A673 (cell line): ENCODE measurements at regions of chr17 and their contacts with region 1.

Region 1: GRCh38 chr17:55295411-55296170 is 30.8 kb downstream of the HLF start:
- DNase-seq: peak; percentile 78
- H3K4me3 ChIP-seq: no peak overlapping the region
- H3K27ac ChIP-seq: no peak overlapping the region
- H3K4me1 ChIP-seq: peaks cover 22% of the 10 kb centered on the region
- H3K27me3 ChIP-seq: no peaks in the 10 kb centered on the region
- CTCF ChIP-seq: peak; percentile 87

Region 2: DNA sequence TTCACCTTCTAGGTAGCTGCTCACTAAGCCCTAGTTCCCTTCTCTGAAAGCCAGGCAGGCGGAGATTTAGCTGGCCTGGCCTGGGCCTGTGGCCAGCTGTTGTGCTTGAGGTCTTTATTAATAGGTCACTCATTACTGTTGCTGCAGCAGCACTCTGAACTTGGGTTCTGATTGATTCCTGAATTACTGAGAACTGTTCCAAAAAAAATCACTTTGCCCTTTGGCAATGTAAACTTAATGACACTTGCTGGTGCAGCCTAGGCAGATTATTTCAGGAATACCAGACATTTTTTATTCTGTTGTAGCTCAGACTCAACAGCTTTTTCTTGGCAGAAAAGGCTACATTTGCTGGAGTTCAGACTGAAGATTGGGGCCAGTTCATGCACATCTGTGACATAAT is 392.2 kb before region 1 on chr17:
- CTCF ChIA-PET with region 1: no interaction called
- POLR2A ChIA-PET with region 1: no interaction called
- intact Hi-C with region 1: no loop called
- DNase-seq: no peak
- H3K4me3 ChIP-seq: no peak overlapping the region
- H3K27ac ChIP-seq: no peak overlapping the region
- H3K4me1 ChIP-seq: peaks cover 9% of the 10 kb centered on the region
- H3K27me3 ChIP-seq: no peaks in the 10 kb centered on the region
- CTCF ChIP-seq: no peak

Region 3: GRCh38 chr17:54992797-54993639 is 302.6 kb before region 1 on chr17:
- CTCF ChIA-PET with region 1: no interaction called
- POLR2A ChIA-PET with region 1: no interaction called
- intact Hi-C with region 1: loop called (anchors 2 kb)
- DNase-seq: peak; percentile 74
- H3K4me3 ChIP-seq: no peak overlapping the region
- H3K27ac ChIP-seq: no peak overlapping the region
- H3K4me1 ChIP-seq: no peaks in the 10 kb centered on the region
- H3K27me3 ChIP-seq: no peaks in the 10 kb centered on the region
- CTCF ChIP-seq: peak; percentile 80

Region 4: DNA sequence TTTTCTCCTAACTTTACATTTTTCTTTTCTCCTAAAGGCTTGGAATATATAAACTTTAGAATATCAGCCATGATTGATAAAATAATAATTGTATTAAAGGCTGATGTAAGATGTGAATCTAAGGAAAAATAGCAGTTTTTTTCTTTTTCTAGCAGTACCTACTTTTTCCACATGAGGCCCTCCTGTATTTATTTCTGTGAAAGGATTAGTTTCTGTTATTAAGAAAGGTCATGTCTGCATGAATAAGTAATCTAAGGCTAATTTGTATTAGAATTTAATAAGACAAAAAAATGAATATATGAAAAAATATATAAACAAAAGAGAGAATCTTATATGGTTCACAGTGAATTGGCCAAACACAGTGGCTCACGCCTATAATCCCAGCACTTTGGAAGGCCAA is 241.7 kb before region 1 on chr17:
- CTCF ChIA-PET with region 1: no interaction called
- POLR2A ChIA-PET with region 1: no interaction called
- intact Hi-C with region 1: loop called (anchors 1 kb)
- DNase-seq: peak; percentile 58
- H3K4me3 ChIP-seq: no peak overlapping the region
- H3K27ac ChIP-seq: no peak overlapping the region
- H3K4me1 ChIP-seq: peaks cover 31% of the 10 kb centered on the region
- H3K27me3 ChIP-seq: no peaks in the 10 kb centered on the region
- CTCF ChIP-seq: peak; percentile 73

Region 5: GRCh38 chr17:55224746-55225145 is 70.8 kb before region 1 on chr17:
- CTCF ChIA-PET with region 1: no interaction called
- POLR2A ChIA-PET with region 1: no interaction called
- intact Hi-C with region 1: no loop called
- DNase-seq: no peak
- H3K4me3 ChIP-seq: no peak overlapping the region
- H3K27ac ChIP-seq: no peak overlapping the region
- H3K4me1 ChIP-seq: no peaks in the 10 kb centered on the region
- H3K27me3 ChIP-seq: no peaks in the 10 kb centered on the region
- CTCF ChIP-seq: no peak